Activated naive CD4-positive, alpha-beta T cell treated with anti-CD3 and anti-CD28 coated beads for 36 hours (primary cell): ENCODE measurements at regions of chr12 and their contacts with region 1.

Region 1: GRCh38 chr12:31728917-31729640 is at the start of gene AMN1:
- DNase-seq: peak; percentile 99
- H3K4me3 Mint-ChIP-seq: peak within 1 kb of the TSS; percentile 95
- H3K27ac Mint-ChIP-seq: peak within 1 kb of the TSS; percentile 97
- H3K4me1 Mint-ChIP-seq: peaks cover 38% of the 10 kb centered on the region
- H3K27me3 Mint-ChIP-seq: no peaks in the 10 kb centered on the region
- total RNA-seq, gene AMN1: 6.6 to 8.0 TPM

Region 2: GRCh38 chr12:31317471-31318395 is 411.3 kb before region 1 on chr12:
- CTCF ChIA-PET with region 1: no interaction called
- intact Hi-C with region 1: loop called (anchors 1 kb)
- DNase-seq: no peak
- H3K4me3 Mint-ChIP-seq: peak overlapping the region; percentile 74
- H3K27ac Mint-ChIP-seq: peak overlapping the region; percentile 99
- H3K4me1 Mint-ChIP-seq: peaks cover 73% of the 10 kb centered on the region
- H3K27me3 Mint-ChIP-seq: no peaks in the 10 kb centered on the region

Region 3: GRCh38 chr12:31456562-31456961 is 272.5 kb before region 1 on chr12:
- CTCF ChIA-PET with region 1: no interaction called
- intact Hi-C with region 1: no loop called
- DNase-seq: no peak
- H3K4me3 Mint-ChIP-seq: no peak overlapping the region
- H3K27ac Mint-ChIP-seq: no peak overlapping the region
- H3K4me1 Mint-ChIP-seq: no peaks in the 10 kb centered on the region
- H3K27me3 Mint-ChIP-seq: no peaks in the 10 kb centered on the region

Region 4: GRCh38 chr12:31759632-31760459 is 30.8 kb after region 1 on chr12:
- CTCF ChIA-PET with region 1: interaction called, 3 read pairs
- intact Hi-C with region 1: loop called (anchors 1 kb)
- DNase-seq: no peak
- H3K4me3 Mint-ChIP-seq: no peak overlapping the region
- H3K27ac Mint-ChIP-seq: no peak overlapping the region
- H3K4me1 Mint-ChIP-seq: peaks cover 17% of the 10 kb centered on the region
- H3K27me3 Mint-ChIP-seq: no peaks in the 10 kb centered on the region

Region 5: DNA sequence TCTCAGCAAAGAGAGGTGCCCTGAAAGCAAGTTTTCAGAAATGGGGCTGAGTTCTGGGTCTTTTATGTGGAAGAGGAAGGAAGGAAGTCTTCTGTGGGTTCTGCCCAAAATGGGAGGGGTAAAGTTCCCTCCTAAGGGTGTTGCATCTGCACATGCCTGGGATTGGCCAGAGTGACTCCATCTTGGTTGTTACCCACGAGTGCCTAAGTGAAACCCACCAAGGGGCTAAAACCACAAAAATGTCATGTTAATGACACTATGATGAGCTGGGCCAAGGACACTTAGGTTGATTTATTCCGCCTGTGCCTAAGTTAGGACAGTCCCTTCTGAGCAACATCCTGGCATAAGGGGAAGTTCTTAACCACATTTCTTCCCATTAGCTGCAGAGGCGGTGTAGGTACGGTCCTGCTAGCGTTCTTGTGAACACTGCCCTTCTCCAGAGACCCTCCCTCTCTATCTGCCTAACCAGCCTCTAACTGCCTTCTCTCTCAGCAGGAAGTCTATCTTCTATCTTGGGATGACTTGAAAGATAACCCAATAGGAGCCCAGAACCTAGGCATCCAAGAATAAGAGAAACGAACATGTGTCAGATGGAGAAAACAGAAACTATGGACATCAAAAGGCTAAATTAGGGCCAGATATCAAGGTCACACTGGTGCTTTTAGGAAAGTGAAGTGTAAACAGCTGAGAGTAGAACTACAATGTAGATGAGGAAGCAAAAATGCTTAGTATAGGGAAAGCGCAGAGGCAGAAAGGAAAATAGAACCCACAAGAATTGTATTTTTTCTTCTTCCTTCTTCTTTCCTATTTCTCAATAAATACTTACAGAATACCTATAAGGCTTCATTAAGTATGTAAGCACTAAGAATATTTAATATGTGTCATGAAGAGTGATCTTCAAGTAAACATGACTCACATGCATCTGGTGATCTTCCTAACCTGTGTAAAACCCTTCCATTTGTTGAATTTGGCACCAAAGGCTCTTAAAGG is 104.0 kb after region 1 on chr12:
- CTCF ChIA-PET with region 1: no interaction called
- intact Hi-C with region 1: loop called (anchors 1 kb)
- DNase-seq: peak; percentile 63
- H3K4me3 Mint-ChIP-seq: no peak overlapping the region
- H3K27ac Mint-ChIP-seq: peak overlapping the region; percentile 89
- H3K4me1 Mint-ChIP-seq: peaks cover 46% of the 10 kb centered on the region
- H3K27me3 Mint-ChIP-seq: no peaks in the 10 kb centered on the region

Region 6: GRCh38 chr12:31859232-31859977 is 130.3 kb after region 1 on chr12:
- CTCF ChIA-PET with region 1: no interaction called
- intact Hi-C with region 1: no loop called
- DNase-seq: peak; percentile 33
- H3K4me3 Mint-ChIP-seq: no peak overlapping the region
- H3K27ac Mint-ChIP-seq: peak overlapping the region; percentile 65
- H3K4me1 Mint-ChIP-seq: peaks cover 23% of the 10 kb centered on the region
- H3K27me3 Mint-ChIP-seq: no peaks in the 10 kb centered on the region

Region 7: DNA sequence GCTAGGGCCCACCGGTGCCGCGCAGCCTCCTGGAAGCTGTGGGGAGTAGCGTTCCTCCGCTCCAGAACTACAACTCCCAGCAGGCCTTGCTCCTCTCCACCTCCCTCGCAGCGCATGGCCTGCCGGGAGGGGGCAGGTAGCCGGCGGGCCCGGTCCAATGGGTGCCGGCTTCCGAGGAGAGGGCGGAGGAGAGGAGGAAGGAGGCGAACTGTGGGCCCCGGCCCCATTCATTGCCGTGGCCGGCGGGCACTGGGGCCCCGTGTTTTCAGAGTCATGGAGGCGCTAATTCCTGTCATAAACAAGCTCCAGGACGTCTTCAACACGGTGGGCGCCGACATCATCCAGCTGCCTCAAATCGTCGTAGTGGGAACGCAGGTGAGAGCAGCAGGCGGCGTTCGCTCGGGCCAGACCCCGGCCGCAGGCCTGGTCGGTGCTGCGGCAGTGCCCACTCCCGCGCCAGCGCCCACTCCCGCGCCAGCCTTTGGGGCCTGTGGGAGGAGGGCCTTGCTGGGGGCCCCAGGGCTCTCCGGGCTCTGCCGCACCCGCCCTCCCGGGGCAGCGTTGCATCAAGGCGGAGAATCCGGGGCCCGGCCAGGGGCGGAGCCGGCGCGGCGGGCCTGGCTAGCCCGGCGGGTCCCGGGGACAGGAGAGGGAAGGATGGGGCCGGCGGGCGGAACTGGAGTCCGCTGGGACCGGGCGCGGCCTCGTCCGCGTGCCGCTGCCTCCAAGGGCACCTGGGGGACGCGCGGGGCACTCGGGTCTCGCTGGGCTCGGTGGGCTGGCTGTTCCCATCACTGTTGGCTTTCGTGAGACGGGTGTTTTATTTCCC is 950.2 kb after region 1 on chr12 and contains the start of gene DNM1L:
- CTCF ChIA-PET with region 1: no interaction called
- intact Hi-C with region 1: loop called (anchors 1 kb)
- DNase-seq: peak; percentile 94
- H3K4me3 Mint-ChIP-seq: peak within 1 kb of the TSS; percentile 81
- H3K27ac Mint-ChIP-seq: peak within 1 kb of the TSS; percentile 82
- H3K4me1 Mint-ChIP-seq: peaks cover 24% of the 10 kb centered on the region
- H3K27me3 Mint-ChIP-seq: no peaks in the 10 kb centered on the region
- total RNA-seq, gene DNM1L: 54.4 to 61.5 TPM